HAP-1 (cell line): ENCODE measurements at regions of chr7 and their contacts with region 1.

Region 1: GRCh38 chr7:97027427-97028234 is 3.0 kb upstream of the DLX5 start:
- DNase-seq: peak; percentile 85
- H3K4me3 ChIP-seq: 0 out of 2 replicates have a peak overlapping the region, but pooled peaks have one; percentile 8
- H3K4me1 ChIP-seq: peaks cover 9% of the 10 kb centered on the region
- H3K27me3 ChIP-seq: no peaks in the 10 kb centered on the region

Region 2: DNA sequence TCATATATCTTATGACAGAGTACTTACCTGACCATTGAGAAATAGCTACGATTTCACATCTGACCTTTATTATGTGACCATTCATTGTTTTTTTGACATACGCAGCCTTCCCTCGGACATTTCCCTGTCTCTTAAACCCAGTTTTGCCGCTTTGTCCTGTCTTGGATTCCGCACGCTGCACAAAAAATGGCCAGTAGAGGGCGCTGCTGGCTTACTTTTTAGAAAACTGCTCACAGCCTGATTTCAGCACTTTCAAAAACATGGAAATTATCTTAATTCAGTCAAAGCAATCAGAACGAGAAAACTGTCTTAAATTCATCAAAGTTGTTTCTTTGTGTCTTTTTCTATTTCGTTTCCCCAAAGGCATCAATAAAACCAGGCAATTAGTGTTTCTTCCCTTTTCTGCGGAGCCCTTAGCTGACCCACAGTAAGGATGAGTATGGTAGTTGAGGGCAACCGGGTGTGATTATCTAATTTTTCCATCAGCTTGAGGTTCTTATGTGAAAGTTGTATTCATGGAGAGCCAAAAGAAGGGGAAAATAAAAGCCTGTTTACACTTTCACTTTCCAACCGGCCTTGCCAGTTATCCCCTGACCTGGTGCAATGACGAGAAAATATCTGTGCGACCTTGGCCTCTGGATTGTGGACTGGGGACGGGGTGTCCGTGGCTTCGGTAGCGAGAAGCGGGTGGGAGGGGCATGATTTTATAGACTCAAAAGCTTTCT is 1110.9 kb before region 1 on chr7:
- in situ Hi-C with region 1: loop called (anchors 10 kb)
- DNase-seq: peak; percentile 30 to 88
- H3K4me3 ChIP-seq: no peak overlapping the region
- H3K4me1 ChIP-seq: peaks cover 6% of the 10 kb centered on the region
- H3K27me3 ChIP-seq: peaks cover 14% of the 10 kb centered on the region

Region 3: GRCh38 chr7:96075510-96076349 is 951.9 kb before region 1 on chr7:
- in situ Hi-C with region 1: loop called (anchors 10 kb)
- DNase-seq: peak; percentile 86 to 91
- H3K4me3 ChIP-seq: peak overlapping the region; percentile 35
- H3K4me1 ChIP-seq: peaks cover 62% of the 10 kb centered on the region
- H3K27me3 ChIP-seq: no peaks in the 10 kb centered on the region

Region 4: DNA sequence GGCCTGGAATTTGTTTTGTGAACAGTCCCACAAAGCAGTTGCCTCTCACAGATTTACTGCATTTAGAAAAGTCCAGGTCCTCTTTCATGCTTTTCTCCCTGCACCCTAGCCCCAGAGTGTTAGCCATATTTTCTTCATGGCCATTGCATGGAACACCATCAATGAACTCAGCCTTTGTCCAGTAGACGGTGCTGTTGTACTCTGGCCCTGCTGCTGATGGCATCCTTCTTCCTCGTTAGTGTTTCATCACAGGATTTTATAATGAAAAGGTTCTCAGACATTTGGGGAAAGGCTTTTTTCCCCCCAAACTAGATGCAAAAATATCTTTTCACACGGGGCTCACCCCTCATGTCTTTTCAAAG is 612.7 kb before region 1 on chr7:
- in situ Hi-C with region 1: loop called (anchors 10 kb)
- DNase-seq: peak; percentile 55 to 77
- H3K4me3 ChIP-seq: no peak overlapping the region
- H3K4me1 ChIP-seq: peaks cover 7% of the 10 kb centered on the region
- H3K27me3 ChIP-seq: no peaks in the 10 kb centered on the region